ENCODE measurements at regions of chr20 and their contacts with region 1.

Region 1: DNA sequence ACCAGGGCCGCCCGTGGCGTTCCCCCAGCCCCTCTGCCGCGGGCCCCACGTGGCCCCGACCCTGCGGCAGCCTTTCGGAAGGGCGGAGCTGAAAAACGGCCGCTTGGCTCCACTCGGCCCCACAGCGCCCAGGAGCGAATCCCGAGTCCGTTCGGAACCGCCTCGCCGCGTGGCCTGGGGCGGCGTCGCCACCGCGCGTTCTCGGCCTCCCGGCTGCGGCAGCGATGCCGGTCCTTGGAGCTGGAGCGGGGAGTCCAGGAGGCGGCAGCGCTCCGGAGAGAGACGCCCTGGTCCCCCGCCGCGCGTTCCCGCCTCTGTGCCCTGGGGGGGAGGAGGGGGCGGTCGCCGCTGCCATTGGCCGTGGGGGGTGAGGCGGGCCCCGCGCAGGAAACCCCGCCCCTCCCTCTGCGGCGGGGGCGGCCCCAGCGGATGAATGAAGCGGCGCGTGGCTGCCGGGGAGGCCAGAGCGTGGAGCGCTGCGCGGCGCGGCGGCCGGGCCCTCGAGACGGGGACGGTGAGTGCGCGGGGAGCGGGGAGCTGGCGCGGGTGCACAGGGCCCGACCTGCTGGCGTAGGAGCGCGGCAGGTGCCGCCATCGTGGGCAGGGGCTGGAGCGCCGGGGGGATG is at the start of gene SLCO4A1:
- DNase-seq: peak; percentile 93
- ATAC-seq: peak; percentile 94
- H3K4me3 Mint-ChIP-seq: peak within 1 kb of the TSS; percentile 79
- H3K27ac Mint-ChIP-seq: peak within 1 kb of the TSS; percentile 69
- H3K4me1 Mint-ChIP-seq: peaks cover 11% of the 10 kb centered on the region
- H3K27me3 Mint-ChIP-seq: peaks cover 4% of the 10 kb centered on the region
- total RNA-seq, gene SLCO4A1: 40.5 to 43.4 TPM

Region 2: DNA sequence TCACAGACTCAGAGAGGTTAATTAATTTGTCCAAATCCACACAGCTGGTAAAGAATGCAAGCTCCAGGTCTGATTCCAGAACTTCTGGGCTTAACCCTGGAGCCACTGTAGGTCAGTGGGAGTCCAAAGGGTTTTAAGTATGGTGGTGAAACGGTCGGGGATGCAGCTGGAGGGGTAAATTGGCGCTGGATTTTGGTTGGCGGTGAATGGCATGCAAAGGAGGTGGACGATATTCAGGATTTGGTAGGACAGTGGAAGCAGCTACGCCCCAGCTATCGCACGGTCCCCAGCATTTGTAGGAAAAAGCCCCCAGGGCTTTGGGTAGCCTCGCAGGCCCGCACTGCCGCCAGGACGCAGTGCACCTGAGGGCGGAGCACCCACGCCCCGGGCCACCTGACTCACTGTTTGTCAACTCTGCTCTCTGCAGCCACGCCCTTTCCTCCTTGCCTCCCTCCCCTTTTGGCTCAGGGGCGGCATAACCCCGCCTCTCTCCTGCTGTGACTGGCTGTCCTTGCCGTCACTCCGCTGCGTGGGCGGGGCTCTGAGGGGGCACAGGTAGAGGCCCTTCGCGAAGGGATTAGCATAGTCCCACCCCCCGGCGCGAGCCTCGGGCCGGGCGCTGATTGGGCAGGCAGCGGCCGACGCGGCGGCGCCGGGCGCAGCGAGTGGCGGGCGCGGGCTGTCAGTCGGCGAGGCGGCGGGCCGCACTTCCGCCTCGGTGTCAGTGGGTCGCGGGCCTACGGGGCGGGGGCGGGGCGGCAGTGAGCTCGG is 404.2 kb before region 1 on chr20 and contains the start of gene OSBPL2:
- CTCF ChIA-PET with region 1: no interaction called
- POLR2A ChIA-PET with region 1: no interaction called
- intact Hi-C with region 1: loop called in 1 of 2 experiments (anchors 1 kb)
- DNase-seq: peak; percentile 100
- ATAC-seq: peak; percentile 99
- H3K4me3 Mint-ChIP-seq: peak within 1 kb of the TSS; percentile 77
- H3K27ac Mint-ChIP-seq: peak within 1 kb of the TSS; percentile 74
- H3K4me1 Mint-ChIP-seq: peaks cover 34% of the 10 kb centered on the region
- H3K27me3 Mint-ChIP-seq: no peaks in the 10 kb centered on the region
- total RNA-seq, gene OSBPL2: 19.2 to 23.0 TPM

Region 3: GRCh38 chr20:62401331-62401779 is 240.8 kb before region 1 on chr20:
- CTCF ChIA-PET with region 1: no interaction called
- POLR2A ChIA-PET with region 1: no interaction called
- intact Hi-C with region 1: no loop called
- DNase-seq: no peak
- ATAC-seq: no peak
- H3K4me3 Mint-ChIP-seq: no peak overlapping the region
- H3K27ac Mint-ChIP-seq: no peak overlapping the region
- H3K4me1 Mint-ChIP-seq: peaks cover 13% of the 10 kb centered on the region
- H3K27me3 Mint-ChIP-seq: no peaks in the 10 kb centered on the region

Region 4: GRCh38 chr20:62500237-62500864 is 141.8 kb before region 1 on chr20:
- CTCF ChIA-PET with region 1: no interaction called
- POLR2A ChIA-PET with region 1: interaction called, 3 read pairs
- intact Hi-C with region 1: loop called in 1 of 2 experiments (anchors 1 kb)
- DNase-seq: peak; percentile 91
- ATAC-seq: peak; percentile 14
- H3K4me3 Mint-ChIP-seq: no peak overlapping the region
- H3K27ac Mint-ChIP-seq: peak overlapping the region; percentile 82
- H3K4me1 Mint-ChIP-seq: peaks cover 32% of the 10 kb centered on the region
- H3K27me3 Mint-ChIP-seq: peaks cover 1% of the 10 kb centered on the region

Region 5: DNA sequence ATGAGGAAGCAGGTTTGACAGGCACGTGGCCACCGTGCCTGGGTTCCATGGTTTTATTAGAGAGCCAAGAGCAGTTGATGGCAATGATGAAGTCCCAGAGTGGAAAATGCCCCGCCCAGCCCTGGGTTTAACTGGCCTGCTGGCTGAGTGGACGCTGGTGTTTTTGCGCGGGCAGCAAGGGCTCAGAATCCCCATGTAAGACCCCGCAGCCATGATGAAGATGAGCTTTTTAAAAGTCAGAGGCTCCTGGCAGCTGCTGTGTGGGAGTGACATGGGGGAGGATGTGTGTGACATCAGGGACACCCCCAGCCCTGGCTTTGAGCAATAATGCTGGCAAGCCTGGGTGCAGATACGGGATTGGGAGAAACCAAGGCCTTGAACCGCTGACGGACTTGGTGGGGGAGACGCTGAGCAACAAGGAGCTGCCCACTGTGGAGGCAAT is 32.9 kb before region 1 on chr20:
- CTCF ChIA-PET with region 1: no interaction called
- POLR2A ChIA-PET with region 1: no interaction called
- intact Hi-C with region 1: no loop called
- DNase-seq: no peak
- ATAC-seq: no peak
- H3K4me3 Mint-ChIP-seq: no peak overlapping the region
- H3K27ac Mint-ChIP-seq: no peak overlapping the region
- H3K4me1 Mint-ChIP-seq: no peaks in the 10 kb centered on the region
- H3K27me3 Mint-ChIP-seq: peaks cover 5% of the 10 kb centered on the region

Region 6: GRCh38 chr20:62623488-62624324 is 18.4 kb before region 1 on chr20:
- CTCF ChIA-PET with region 1: interaction called, 7 read pairs
- POLR2A ChIA-PET with region 1: interaction called, 3 read pairs
- intact Hi-C with region 1: loop called (anchors 1 kb)
- DNase-seq: peak; percentile 97
- ATAC-seq: peak; percentile 91
- H3K4me3 Mint-ChIP-seq: peak overlapping the region; percentile 69
- H3K27ac Mint-ChIP-seq: peak overlapping the region; percentile 96
- H3K4me1 Mint-ChIP-seq: peaks cover 26% of the 10 kb centered on the region
- H3K27me3 Mint-ChIP-seq: no peaks in the 10 kb centered on the region

Region 7: DNA sequence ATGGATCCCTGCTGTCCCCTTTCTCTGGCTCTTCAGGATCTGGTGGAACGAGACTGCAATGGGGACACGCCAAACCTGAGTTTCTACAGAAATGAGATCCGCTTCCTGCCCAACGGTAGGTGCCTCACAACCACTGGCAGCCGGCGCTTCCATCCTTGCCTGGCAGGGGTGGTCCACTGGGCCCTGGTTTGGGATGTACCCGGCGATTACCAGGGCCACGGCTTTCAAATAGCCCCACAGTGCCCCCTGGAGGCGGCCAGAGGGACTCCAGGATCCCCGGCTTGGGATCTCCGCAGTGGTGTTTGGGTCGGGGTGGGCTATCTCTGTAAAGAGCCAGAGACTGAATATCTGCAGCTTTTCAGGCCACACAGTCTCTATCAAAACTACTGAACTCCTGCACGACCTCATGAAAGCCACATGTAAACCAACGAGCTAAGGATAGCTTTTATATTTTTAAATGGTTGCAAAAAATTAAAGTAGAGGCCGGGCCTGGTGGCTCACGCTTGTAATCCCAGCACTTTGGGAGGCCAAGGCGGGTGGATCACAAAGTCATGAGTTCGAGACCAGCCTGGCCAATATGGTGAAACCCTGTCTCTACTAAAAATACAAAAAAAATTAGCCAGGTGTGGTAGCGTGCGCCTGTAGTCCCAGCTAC is 166.2 kb after region 1 on chr20:
- CTCF ChIA-PET with region 1: interaction called, 10 read pairs
- POLR2A ChIA-PET with region 1: no interaction called
- intact Hi-C with region 1: no loop called
- DNase-seq: peak; percentile 86
- ATAC-seq: peak; percentile 67
- H3K4me3 Mint-ChIP-seq: no peak overlapping the region
- H3K27ac Mint-ChIP-seq: no peak overlapping the region
- H3K4me1 Mint-ChIP-seq: peaks cover 21% of the 10 kb centered on the region
- H3K27me3 Mint-ChIP-seq: no peaks in the 10 kb centered on the region

Region 8: DNA sequence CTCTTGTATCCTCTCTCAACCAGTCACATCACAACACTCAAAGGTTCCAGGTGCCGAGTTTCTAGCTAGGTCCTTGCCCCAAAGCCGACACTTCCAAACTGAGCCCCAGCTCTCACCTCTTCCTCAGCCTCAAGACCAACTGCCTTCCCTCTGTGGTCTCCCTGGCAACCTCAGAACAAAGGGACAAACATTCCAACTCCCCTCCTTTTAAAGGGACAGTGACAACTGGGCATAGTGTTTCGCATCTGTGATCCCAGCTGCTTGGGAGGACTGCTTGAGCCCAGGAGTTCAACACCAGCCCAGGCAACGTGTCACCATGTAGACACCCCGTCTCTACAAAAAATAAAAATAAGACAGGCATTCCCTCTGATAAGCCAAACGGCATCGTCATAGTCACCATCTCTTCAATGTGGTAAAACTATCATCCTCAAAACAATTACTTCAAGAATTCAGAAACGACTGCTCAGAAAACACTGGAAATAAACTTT is 272.9 kb after region 1 on chr20:
- CTCF ChIA-PET with region 1: no interaction called
- POLR2A ChIA-PET with region 1: no interaction called
- intact Hi-C with region 1: no loop called
- DNase-seq: peak; percentile 34
- ATAC-seq: no peak
- H3K4me3 Mint-ChIP-seq: no peak overlapping the region
- H3K27ac Mint-ChIP-seq: peak overlapping the region; percentile 67
- H3K4me1 Mint-ChIP-seq: peaks cover 58% of the 10 kb centered on the region
- H3K27me3 Mint-ChIP-seq: no peaks in the 10 kb centered on the region

Region 9: GRCh38 chr20:62926239-62927104 is 284.3 kb after region 1 on chr20 and contains the start of gene DIDO1:
- CTCF ChIA-PET with region 1: no interaction called
- POLR2A ChIA-PET with region 1: no interaction called
- intact Hi-C with region 1: loop called in 1 of 2 experiments (anchors 5 kb)
- DNase-seq: peak; percentile 94
- ATAC-seq: peak; percentile 78
- H3K4me3 Mint-ChIP-seq: peak within 1 kb of the TSS; percentile 94
- H3K27ac Mint-ChIP-seq: peak within 1 kb of the TSS; percentile 96
- H3K4me1 Mint-ChIP-seq: peaks cover 64% of the 10 kb centered on the region
- H3K27me3 Mint-ChIP-seq: no peaks in the 10 kb centered on the region
- total RNA-seq, gene DIDO1: 43.7 to 49.7 TPM